ENCODE measurements at regions of chr11 and their contacts with region 1.

Region 1: GRCh38 chr11:36746886-36747710 is 149.1 kb upstream of the RAG2 start:
- DNase-seq: peak; percentile 89
- H3K4me3 ChIP-seq: no peak overlapping the region
- H3K27ac ChIP-seq: no peak overlapping the region
- H3K4me1 ChIP-seq: no peaks in the 10 kb centered on the region
- H3K27me3 ChIP-seq: no peaks in the 10 kb centered on the region
- CTCF ChIP-seq: peak; percentile 97 to 98
- POLR2A ChIP-seq: no peak

Region 2: GRCh38 chr11:36534276-36534840 is 212.7 kb before region 1 on chr11:
- CTCF ChIA-PET with region 1: no interaction called
- POLR2A ChIA-PET with region 1: no interaction called
- dilution Hi-C with region 1: no loop called
- intact Hi-C with region 1: no loop called
- DNase-seq: no peak
- H3K4me3 ChIP-seq: no peak overlapping the region
- H3K27ac ChIP-seq: no peak overlapping the region
- H3K4me1 ChIP-seq: no peaks in the 10 kb centered on the region
- H3K27me3 ChIP-seq: peaks cover 0 to 2% of the 10 kb centered on the region in 2 experiments
- CTCF ChIP-seq: no peak
- POLR2A ChIP-seq: no peak

Region 3: GRCh38 chr11:36564376-36565030 is 182.6 kb before region 1 on chr11:
- CTCF ChIA-PET with region 1: interaction called, 154 read pairs
- POLR2A ChIA-PET with region 1: no interaction called
- dilution Hi-C with region 1: no loop called
- intact Hi-C with region 1: loop called (anchors 1 kb)
- DNase-seq: peak; percentile 64
- H3K4me3 ChIP-seq: no peak overlapping the region
- H3K27ac ChIP-seq: no peak overlapping the region
- H3K4me1 ChIP-seq: no peaks in the 10 kb centered on the region
- H3K27me3 ChIP-seq: peaks cover 4 to 27% of the 10 kb centered on the region in 2 experiments
- CTCF ChIP-seq: peak; percentile 42 to 54
- POLR2A ChIP-seq: no peak

Region 4: DNA sequence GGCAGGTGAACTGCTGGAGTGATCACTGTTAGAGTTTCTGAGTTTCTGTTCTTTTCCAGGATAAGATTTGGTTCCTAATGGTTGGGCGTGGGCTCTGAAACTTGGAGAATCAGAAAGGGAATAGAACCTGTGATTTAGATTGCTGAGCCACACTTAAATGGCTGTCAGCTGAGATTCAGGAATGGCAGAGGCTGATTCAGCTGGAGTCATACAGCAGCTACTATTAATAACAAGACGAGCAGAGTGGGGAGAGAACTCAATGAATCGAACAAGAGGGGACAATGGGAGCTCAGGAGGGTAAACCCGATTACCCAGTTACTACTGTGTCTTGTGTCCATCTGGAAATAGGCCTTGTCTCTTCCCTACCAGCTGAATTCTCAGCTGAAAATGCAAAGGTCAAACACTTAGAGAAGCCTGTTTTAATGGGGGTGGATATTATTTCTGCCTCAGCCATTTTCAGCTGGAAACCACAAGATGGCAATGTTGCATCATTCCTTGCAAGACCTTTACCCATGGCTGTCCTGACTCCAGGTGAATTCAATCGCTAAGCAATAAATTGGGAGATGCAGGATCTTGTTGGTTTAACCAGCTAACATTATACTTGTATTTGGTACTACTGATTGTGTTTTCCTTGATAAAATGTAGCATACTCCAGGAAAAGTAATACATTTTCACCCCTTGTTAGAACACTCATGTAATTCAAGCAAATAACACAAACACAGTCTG is 44.6 kb before region 1 on chr11:
- CTCF ChIA-PET with region 1: interaction called, 164 read pairs
- POLR2A ChIA-PET with region 1: no interaction called
- dilution Hi-C with region 1: no loop called
- intact Hi-C with region 1: loop called (anchors 1 kb)
- DNase-seq: peak; percentile 62
- H3K4me3 ChIP-seq: no peak overlapping the region
- H3K27ac ChIP-seq: no peak overlapping the region
- H3K4me1 ChIP-seq: no peaks in the 10 kb centered on the region
- H3K27me3 ChIP-seq: peaks cover 1 to 9% of the 10 kb centered on the region in 2 experiments
- CTCF ChIP-seq: peak; percentile 58 to 63
- POLR2A ChIP-seq: no peak

Region 5: DNA sequence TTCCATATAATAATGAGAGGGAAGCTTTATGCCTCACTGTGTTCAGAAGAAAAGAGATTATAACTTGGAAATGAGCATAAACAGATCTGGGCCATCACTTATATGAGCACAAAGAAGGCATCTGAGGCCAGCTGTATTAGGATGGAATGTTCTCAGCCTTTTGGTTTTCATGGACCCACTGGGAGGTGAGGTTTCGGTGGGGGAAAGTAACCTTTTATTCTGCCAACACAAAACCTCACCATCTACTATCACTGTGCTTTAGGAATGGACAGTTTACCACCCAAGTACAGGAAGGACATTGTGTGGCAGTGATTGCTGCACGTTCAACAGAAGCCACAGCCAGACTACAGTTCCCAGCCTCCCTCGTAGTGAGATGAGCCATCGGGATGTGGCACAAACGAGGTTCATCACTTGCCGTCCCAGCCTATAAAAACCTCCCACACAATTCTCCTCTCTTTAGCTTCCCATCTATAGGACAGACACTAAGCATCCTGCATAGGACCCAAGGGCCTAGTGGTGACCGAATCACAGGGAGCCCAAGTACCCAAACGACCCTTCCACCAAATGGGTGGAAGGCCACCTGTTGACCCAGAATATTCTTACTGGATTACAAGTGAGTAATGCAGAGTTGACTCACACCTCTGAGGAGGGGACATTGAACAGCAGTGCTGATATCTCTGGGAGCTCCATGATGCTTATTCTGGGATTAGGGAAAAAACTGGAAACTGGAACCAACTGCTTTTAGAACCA is 27.6 kb before region 1 on chr11:
- CTCF ChIA-PET with region 1: interaction called, 12 read pairs
- POLR2A ChIA-PET with region 1: no interaction called
- dilution Hi-C with region 1: no loop called
- intact Hi-C with region 1: no loop called
- DNase-seq: no peak
- H3K4me3 ChIP-seq: no peak overlapping the region
- H3K27ac ChIP-seq: no peak overlapping the region
- H3K4me1 ChIP-seq: no peaks in the 10 kb centered on the region
- H3K27me3 ChIP-seq: no peaks in the 10 kb centered on the region
- CTCF ChIP-seq: no peak
- POLR2A ChIP-seq: no peak

Measured in endothelial cell of umbilical vein (primary cell).